Heart left ventricle (tissue), 16 donors: ENCODE measurements at regions of chr1 and their contacts with region 1.

Region 1: GRCh38 chr1:22105611-22106207 is 37.2 kb downstream of the WNT4 start:
- DNase-seq: no peak
- ATAC-seq: peak in 3 of 4 donors; percentile 41 to 45 (median 42)
- H3K4me3 ChIP-seq: no peak overlapping the region
- H3K27ac ChIP-seq: no peak overlapping the region
- H3K4me1 ChIP-seq: peaks cover 0 to 39% (median 16%) of the 10 kb centered on the region in 12 donors
- H3K27me3 ChIP-seq: no peaks in the 10 kb centered on the region
- CTCF ChIP-seq: peak; percentile 66 to 83 (median 78)
- POLR2A ChIP-seq: no peak

Region 2: GRCh38 chr1:22275721-22276395 is 170.1 kb after region 1 on chr1:
- intact Hi-C with region 1: loop called in 8 of 10 experiments (anchors 5 to 10 kb)
- DNase-seq: peak in 1 of 5 donors; percentile 16
- ATAC-seq: peak in 3 of 4 donors; percentile 44 to 76 (median 72)
- H3K4me3 ChIP-seq: no peak overlapping the region
- H3K27ac ChIP-seq: no peak overlapping the region
- H3K4me1 ChIP-seq: no peaks in the 10 kb centered on the region
- H3K27me3 ChIP-seq: peaks cover 0 to 50% (median 0%) of the 10 kb centered on the region in 9 donors
- CTCF ChIP-seq: peak; percentile 50 to 74 (median 68)
- POLR2A ChIP-seq: no peak

Region 3: DNA sequence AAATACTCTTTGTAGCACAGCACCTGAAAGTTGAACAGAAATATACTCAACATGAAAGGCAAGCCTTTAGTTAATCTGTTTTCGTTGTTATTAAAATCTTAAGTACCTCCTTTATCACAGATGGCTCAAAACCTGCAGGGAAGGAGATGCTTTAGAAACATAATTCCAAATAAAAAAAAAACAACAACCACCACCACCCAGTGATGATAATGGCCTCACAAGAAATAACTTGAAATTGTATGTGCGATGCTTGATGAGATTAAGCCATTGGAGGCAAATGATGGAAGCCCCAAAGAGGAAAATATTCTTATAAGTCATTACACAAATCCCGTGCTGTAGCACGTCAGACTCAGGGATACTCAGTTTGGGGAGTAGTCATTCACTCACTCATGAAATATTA is 321.1 kb after region 1 on chr1:
- intact Hi-C with region 1: no loop called
- DNase-seq: no peak
- ATAC-seq: no peak
- H3K4me3 ChIP-seq: no peak overlapping the region
- H3K27ac ChIP-seq: no peak overlapping the region
- H3K4me1 ChIP-seq: no peaks in the 10 kb centered on the region
- H3K27me3 ChIP-seq: no peaks in the 10 kb centered on the region
- CTCF ChIP-seq: no peak
- POLR2A ChIP-seq: no peak

Region 4: GRCh38 chr1:22641906-22642636 is 536.4 kb after region 1 on chr1:
- intact Hi-C with region 1: loop called in 4 of 10 experiments (anchors 5 to 10 kb)
- DNase-seq: peak; percentile 77 to 93 (median 85)
- ATAC-seq: peak; percentile 59 to 88 (median 81)
- H3K4me3 ChIP-seq: no peak overlapping the region
- H3K27ac ChIP-seq: peak overlapping the region in 2 of 12 donors; percentile 9 to 75
- H3K4me1 ChIP-seq: peaks cover 0 to 20% (median 0%) of the 10 kb centered on the region in 12 donors
- H3K27me3 ChIP-seq: peaks cover 0 to 26% (median 0%) of the 10 kb centered on the region in 9 donors
- CTCF ChIP-seq: peak; percentile 79 to 96 (median 90)
- POLR2A ChIP-seq: no peak